Activated T-helper 1 cell treated with anti-CD3 and anti-CD28 coated beads, Interleukin-12 subunit alpha, Interleukin-12 subunit beta, Interleukin-2, Interleukin-4 antibody, amounts not matched to agents 30 ng/mL and 10 ng/mL and 1 ng/mL, durations not matched to agents 14 hours and 24 hours and 36 hours (primary cell): ENCODE measurements at regions of chr3 and their contacts with region 1.

Region 1: GRCh38 chr3:187919048-187919447 is 173.8 kb upstream of the BCL6 start:
- DNase-seq: peak; percentile 67
- H3K4me3 Mint-ChIP-seq: peak overlapping the region; percentile 62
- H3K27ac Mint-ChIP-seq: peak overlapping the region; percentile 93
- H3K4me1 Mint-ChIP-seq: peaks cover 86% of the 10 kb centered on the region
- H3K27me3 Mint-ChIP-seq: peaks cover 3% of the 10 kb centered on the region

Region 2: GRCh38 chr3:187850331-187850921 is 68.6 kb before region 1 on chr3:
- intact Hi-C with region 1: loop called (anchors 2 kb)
- DNase-seq: no peak
- H3K4me3 Mint-ChIP-seq: no peak overlapping the region
- H3K27ac Mint-ChIP-seq: no peak overlapping the region
- H3K4me1 Mint-ChIP-seq: peaks cover 28% of the 10 kb centered on the region
- H3K27me3 Mint-ChIP-seq: no peaks in the 10 kb centered on the region

Region 3: DNA sequence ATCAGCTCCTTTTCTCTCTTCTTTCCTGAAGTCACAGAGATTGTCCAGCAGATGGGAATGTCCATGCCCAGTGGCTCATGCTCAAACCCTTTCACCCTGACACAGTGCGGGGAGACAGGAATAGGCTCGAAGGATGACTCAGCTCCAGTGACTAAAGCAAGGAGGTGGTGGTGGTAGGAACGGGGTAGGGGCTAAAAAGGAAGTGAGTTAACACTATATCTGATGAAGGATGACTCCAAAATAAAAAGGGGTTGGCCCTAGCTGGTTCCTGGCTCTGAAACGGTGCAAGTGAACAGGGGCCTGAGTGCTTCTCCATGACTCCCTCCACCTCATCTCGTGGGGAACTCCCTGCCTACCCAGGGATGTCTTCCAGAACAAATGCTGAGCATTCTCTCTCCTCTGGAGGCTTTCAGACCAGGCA is 67.5 kb after region 1 on chr3:
- intact Hi-C with region 1: loop called (anchors 1 kb)
- DNase-seq: peak; percentile 34
- H3K4me3 Mint-ChIP-seq: peak overlapping the region; percentile 21
- H3K27ac Mint-ChIP-seq: peak overlapping the region; percentile 82
- H3K4me1 Mint-ChIP-seq: peaks cover 70% of the 10 kb centered on the region
- H3K27me3 Mint-ChIP-seq: no peaks in the 10 kb centered on the region

Region 4: GRCh38 chr3:188294823-188295487 is 375.9 kb after region 1 on chr3:
- intact Hi-C with region 1: loop called (anchors 1 kb)
- DNase-seq: no peak
- H3K4me3 Mint-ChIP-seq: no peak overlapping the region
- H3K27ac Mint-ChIP-seq: peak overlapping the region; percentile 33
- H3K4me1 Mint-ChIP-seq: peaks cover 86% of the 10 kb centered on the region
- H3K27me3 Mint-ChIP-seq: no peaks in the 10 kb centered on the region

Region 5: GRCh38 chr3:188584162-188584529 is 665.1 kb after region 1 on chr3:
- intact Hi-C with region 1: loop called (anchors 5 kb)
- DNase-seq: no peak
- H3K4me3 Mint-ChIP-seq: no peak overlapping the region
- H3K27ac Mint-ChIP-seq: no peak overlapping the region
- H3K4me1 Mint-ChIP-seq: no peaks in the 10 kb centered on the region
- H3K27me3 Mint-ChIP-seq: no peaks in the 10 kb centered on the region

Region 6: DNA sequence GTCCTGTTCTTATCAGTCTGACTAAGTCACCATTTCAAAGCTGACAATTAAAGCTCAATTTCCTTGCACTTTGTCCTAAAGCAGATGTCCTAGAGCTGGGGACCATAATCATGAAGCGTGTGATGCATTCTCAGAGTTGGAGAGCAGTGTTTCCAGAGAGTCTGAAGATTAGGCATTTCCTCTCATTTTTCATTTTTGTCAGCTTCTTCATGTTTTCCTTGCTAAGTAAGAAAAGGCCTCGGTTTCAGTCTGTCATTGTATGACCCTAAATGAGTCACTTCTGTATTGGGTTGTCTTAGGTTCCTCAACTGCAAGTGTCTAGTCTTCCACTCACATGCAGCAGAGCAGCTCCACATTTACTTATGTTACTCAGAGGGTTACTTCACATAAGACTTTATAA is 995.5 kb after region 1 on chr3:
- intact Hi-C with region 1: loop called (anchors 1 kb)
- DNase-seq: no peak
- H3K4me3 Mint-ChIP-seq: peak overlapping the region; percentile 34
- H3K27ac Mint-ChIP-seq: peak overlapping the region; percentile 88
- H3K4me1 Mint-ChIP-seq: peaks cover 46% of the 10 kb centered on the region
- H3K27me3 Mint-ChIP-seq: no peaks in the 10 kb centered on the region